Activated CD4-positive, alpha-beta T cell treated with anti-CD3 and anti-CD28 coated beads for 36 hours (primary cell): ENCODE measurements at regions of chr5 and their contacts with region 1.

Region 1: DNA sequence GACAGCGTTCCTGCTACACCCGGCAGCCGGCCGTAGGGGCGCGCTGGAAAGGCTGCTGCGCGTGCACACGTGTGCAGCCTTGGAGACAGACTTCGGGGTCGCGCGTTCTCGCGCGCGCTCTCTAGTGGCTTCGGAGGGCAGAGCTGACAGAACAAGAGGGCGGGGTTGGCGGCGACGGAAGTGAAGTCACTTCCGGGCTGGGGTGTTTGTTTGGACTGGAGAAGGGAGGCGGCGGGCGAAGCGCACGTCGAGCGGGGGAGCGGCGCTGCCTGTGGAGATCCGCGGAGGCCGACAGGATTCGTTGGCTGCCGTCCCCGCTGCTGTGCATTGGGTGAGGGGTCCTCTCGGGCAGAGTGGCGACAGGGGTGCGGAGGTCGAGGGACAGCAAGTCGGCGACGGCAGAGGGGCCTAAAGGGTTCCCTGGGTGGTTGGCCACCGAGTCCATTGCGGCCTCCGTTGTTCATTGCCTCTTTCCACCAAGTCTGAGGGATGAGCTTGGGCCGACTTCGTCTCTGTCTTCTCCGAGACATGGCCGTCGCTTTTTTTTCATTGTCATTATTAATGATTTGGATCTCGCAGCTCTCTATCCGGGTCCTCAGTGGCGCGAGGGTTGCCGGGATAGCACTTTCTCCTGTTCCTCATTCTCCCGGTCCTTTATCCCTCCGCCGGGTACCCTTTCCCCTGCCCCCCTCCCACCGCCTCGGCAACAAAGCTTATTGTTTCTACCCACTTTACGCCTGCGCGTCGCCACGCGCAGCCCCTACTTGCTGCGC is at the start of gene PAIP2:
- DNase-seq: peak; percentile 99
- ATAC-seq: peak; percentile 88
- H3K4me3 Mint-ChIP-seq: peak within 1 kb of the TSS; percentile 88
- H3K27ac Mint-ChIP-seq: peak within 1 kb of the TSS; percentile 94
- H3K4me1 Mint-ChIP-seq: peaks cover 53% of the 10 kb centered on the region
- H3K27me3 Mint-ChIP-seq: no peaks in the 10 kb centered on the region
- total RNA-seq, gene PAIP2: 101 to 126 TPM

Region 2: DNA sequence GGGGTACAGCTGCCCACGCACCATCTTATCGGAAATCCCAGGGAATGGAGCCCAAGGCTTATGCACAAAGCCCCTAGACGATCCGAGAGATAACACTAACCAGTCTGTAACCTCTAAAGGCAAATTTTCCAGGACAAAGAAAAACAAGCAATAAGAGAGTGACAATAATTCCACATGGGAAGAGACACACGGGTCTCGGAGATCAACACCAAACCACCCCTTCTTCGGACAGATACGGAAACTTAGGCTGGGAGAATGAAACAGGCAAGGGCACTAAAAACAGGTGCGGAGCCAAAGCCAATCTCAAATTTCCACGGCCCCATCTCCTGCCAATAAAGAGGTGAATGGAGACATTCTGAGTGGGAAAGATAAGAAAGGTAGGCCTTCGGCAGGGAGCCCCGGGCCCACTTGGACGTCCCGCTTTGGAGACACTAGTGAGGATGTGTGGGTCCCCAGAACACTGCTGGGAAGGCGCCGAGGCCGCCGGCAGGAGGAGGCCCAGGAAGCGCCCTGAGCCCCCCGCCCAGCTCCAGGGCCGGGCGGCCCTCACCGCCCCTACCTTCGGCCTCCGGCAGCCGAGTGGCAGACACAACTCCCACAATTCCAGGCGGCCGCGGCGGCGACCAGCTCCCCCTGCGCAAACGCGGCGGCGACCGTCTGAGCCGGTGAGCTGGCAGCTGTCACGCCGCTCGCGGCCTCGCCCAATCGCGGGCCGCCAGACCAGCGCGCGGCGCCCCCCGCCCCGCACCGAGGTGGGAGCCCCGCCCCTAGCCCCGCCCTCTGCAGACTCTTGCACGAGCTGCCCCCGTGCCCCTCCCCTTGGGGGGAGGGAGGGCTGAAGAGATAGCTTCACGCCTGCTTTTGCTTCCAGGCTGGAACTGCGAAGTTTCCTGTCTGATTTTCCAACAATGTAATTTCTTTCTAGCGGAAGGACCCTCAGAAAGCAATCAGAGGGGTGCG is 143.8 kb before region 1 on chr5 and contains the start of gene SIL1:
- CTCF ChIA-PET with region 1: interaction called, 3 read pairs
- POLR2A ChIA-PET with region 1: no interaction called
- intact Hi-C with region 1: loop called (anchors 1 kb)
- DNase-seq: peak; percentile 98
- ATAC-seq: peak; percentile 100
- H3K4me3 Mint-ChIP-seq: peak within 1 kb of the TSS; percentile 90
- H3K27ac Mint-ChIP-seq: peak within 1 kb of the TSS; percentile 97
- H3K4me1 Mint-ChIP-seq: peaks cover 18% of the 10 kb centered on the region
- H3K27me3 Mint-ChIP-seq: peaks cover 2% of the 10 kb centered on the region
- total RNA-seq, gene SIL1: 11.2 to 14.4 TPM

Region 3: DNA sequence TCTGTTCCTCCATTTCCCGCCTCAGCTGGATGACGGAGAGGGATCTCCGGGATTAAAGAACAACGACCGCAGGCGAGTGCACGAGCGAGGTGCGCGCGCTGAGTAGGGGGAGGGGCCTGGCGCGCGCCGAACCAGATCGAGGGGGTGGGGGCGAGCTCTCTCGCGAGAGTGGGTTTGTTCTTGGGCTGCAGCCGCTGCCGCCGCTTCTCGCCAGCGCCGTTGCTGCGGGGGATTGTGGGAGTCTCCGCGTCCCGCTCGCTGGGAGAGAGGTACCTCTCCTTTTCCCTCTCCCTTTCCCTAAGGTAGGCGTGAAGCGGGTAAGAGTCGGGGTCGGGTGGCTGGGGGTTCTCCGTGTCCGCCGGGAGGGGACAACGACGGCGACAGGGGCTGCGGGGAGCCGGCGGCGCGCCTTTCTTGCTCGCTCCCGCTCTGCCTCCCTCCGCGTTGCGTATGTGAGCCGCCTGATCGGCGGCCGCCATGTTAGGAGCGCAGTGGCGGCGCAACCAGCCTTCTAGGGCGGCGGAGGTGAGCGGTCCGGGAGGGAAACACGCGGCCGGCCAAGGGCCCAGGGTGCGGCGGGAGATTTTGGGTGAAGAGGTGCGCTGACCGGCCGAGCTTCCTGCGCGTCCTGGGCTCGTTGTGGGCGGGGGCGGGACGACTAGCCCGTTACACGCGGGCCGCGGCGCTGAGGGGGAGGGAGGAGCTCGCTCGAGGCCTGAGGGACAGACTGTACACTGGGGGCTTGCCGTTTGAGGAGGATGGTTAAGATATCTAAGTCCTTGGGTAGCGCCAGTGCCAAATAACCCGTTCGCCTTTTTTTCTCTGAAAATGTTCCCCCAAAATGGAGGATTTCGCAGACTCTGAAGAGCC is 48.1 kb before region 1 on chr5 and contains the start of gene MATR3:
- CTCF ChIA-PET with region 1: interaction called, 5 read pairs
- POLR2A ChIA-PET with region 1: interaction called, 16 read pairs
- intact Hi-C with region 1: loop called (anchors 1 kb)
- DNase-seq: peak; percentile 98
- ATAC-seq: peak; percentile 92
- H3K4me3 Mint-ChIP-seq: peak within 1 kb of the TSS; percentile 97
- H3K27ac Mint-ChIP-seq: peak within 1 kb of the TSS; percentile 99
- H3K4me1 Mint-ChIP-seq: peaks cover 37% of the 10 kb centered on the region
- H3K27me3 Mint-ChIP-seq: no peaks in the 10 kb centered on the region
- total RNA-seq, gene MATR3: 113 to 133 TPM

Region 4: GRCh38 chr5:139354186-139354585 is 12.3 kb after region 1 on chr5:
- CTCF ChIA-PET with region 1: interaction called, 11 read pairs
- POLR2A ChIA-PET with region 1: interaction called, 5 read pairs
- intact Hi-C with region 1: no loop called
- DNase-seq: no peak
- ATAC-seq: no peak
- H3K4me3 Mint-ChIP-seq: no peak overlapping the region
- H3K27ac Mint-ChIP-seq: no peak overlapping the region
- H3K4me1 Mint-ChIP-seq: peaks cover 28% of the 10 kb centered on the region
- H3K27me3 Mint-ChIP-seq: no peaks in the 10 kb centered on the region

Region 5: GRCh38 chr5:139368613-139369012 is 26.8 kb after region 1 on chr5:
- CTCF ChIA-PET with region 1: interaction called, 10 read pairs
- POLR2A ChIA-PET with region 1: interaction called, 4 read pairs
- intact Hi-C with region 1: no loop called
- DNase-seq: no peak
- ATAC-seq: no peak
- H3K4me3 Mint-ChIP-seq: no peak overlapping the region
- H3K27ac Mint-ChIP-seq: no peak overlapping the region
- H3K4me1 Mint-ChIP-seq: peaks cover 17% of the 10 kb centered on the region
- H3K27me3 Mint-ChIP-seq: no peaks in the 10 kb centered on the region

Region 6: GRCh38 chr5:139403787-139404483 is 62.1 kb after region 1 on chr5 and contains the start of gene SPATA24:
- CTCF ChIA-PET with region 1: interaction called, 6 read pairs
- POLR2A ChIA-PET with region 1: interaction called, 3 read pairs
- intact Hi-C with region 1: loop called in 1 of 2 experiments (anchors 1 kb)
- DNase-seq: peak; percentile 100
- ATAC-seq: peak; percentile 93
- H3K4me3 Mint-ChIP-seq: peak within 1 kb of the TSS; percentile 79
- H3K27ac Mint-ChIP-seq: peak within 1 kb of the TSS; percentile 99
- H3K4me1 Mint-ChIP-seq: peaks cover 37% of the 10 kb centered on the region
- H3K27me3 Mint-ChIP-seq: no peaks in the 10 kb centered on the region
- total RNA-seq, gene SPATA24: 4.6 to 5.9 TPM